HepG2 (cell line): ENCODE measurements at regions of chr22 and their contacts with region 1.

Region 1: DNA sequence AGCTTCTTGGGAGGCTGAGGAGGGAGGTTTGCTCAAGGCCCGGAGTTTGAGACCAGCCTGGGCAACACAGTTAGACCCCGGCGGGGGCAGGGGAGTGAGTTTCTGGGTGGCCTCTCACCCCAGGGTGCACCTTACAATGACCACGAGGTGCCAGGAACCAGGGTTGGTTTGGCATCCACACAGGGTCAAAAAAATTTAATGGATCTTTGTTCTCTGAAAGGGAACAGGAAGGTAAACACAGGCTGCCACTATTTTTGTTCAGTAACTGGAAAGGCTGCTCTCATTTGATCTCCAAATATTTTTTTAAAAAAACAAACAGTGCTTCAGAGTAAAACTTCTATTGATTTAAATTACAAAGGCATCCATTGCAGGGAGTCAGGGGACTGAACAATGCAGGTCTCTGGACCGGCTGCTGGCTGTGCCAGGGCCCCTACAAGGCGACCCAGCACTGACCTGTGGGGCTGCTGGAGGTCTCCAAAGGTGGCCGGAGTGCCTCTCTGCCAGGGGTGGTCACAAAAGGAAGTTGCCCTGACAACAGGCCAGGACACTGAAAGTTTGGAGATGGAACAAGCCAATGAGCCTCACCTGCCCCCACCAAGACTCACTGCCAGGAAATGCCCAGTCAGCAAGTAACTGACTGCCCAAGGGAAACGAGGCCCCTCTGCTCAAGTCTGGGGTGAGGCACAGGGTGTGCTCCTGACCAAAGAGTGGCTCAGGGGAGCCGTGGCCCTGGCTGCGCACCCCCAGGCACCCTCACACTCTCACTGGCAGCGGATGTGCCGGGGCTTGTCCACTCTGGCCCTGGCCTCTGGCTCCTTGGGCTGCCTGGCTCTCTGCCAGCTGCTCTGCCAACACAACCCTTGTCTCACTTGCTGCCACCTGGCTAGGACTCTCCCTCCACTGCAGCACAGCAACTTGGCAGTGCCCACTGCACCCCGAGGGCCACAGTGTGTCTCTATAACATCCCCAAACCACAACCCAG is 51.8 kb downstream of the ARFGAP3 start:
- DNase-seq: peak; percentile 93
- ATAC-seq: peak; percentile 78
- H3K4me3 ChIP-seq: peak overlapping the region in 1 of 3 experiments; percentile 26; a peak in 1 of 6 replicates
- H3K27ac ChIP-seq: peak overlapping the region; percentile 96
- H3K4me1 ChIP-seq: peaks cover 88% of the 10 kb centered on the region
- H3K27me3 ChIP-seq: no peaks in the 10 kb centered on the region
- CTCF ChIP-seq: no peak
- EP300 ChIP-seq: peak in 1 of 2 experiments; percentile 90; a peak in 2 of 4 replicates
- POLR2A ChIP-seq: no peak
- RAD21 ChIP-seq: no peak

Region 2: GRCh38 chr22:42717197-42717928 is 87.9 kb before region 1 on chr22:
- CTCF ChIA-PET with region 1: no interaction called
- POLR2A ChIA-PET with region 1: no interaction called
- in situ Hi-C with region 1: no loop called
- intact Hi-C with region 1: no loop called
- DNase-seq: no peak
- ATAC-seq: no peak
- H3K4me3 ChIP-seq: no peak overlapping the region
- H3K27ac ChIP-seq: no peak overlapping the region
- H3K4me1 ChIP-seq: peaks cover 48% of the 10 kb centered on the region
- H3K27me3 ChIP-seq: peaks cover 9 to 50% of the 10 kb centered on the region in 2 experiments
- CTCF ChIP-seq: no peak
- EP300 ChIP-seq: no peak
- POLR2A ChIP-seq: no peak
- RAD21 ChIP-seq: no peak

Region 3: DNA sequence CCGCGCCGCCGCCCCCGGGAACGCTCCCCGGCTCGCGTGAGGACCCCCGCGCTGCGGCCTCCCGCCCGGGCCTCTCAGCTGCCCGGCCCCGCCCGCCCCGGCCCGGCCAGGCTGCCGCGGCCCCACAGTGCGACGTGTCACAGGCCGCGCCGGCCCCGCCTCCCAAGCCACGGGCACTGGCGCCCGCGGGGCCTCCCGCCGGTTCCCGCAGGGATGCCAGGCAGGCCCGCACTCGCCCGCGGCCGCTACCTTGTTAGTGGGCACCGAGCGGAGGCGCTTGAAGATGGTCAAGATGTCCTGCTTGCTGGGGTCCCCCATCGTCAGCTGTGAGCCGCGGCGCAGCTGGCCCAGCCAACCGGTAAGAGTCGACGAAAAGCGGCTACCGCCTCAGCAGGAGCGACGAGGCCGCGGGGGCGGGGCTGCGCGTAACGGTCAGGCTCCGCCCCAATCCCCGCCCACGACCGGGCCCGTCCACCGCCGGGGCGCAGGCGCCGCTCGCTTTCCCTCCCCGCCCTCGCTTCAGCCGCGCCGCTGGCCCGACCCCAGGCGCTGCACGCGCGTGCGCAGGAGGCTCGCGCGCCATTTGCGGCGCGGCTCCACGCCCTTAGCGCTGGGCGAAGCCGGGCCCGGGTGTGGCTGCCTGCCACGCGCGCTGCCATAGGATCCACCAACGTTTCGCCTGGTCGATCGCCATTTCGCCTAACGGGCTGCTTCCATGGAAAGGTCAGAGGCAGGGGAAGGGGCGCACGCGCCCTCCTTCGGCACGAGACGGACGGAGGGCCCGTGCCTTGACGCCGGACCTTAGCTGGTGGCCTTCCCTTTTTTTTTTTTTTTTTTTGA is 51.8 kb after region 1 on chr22 and contains the start of gene ARFGAP3:
- CTCF ChIA-PET with region 1: no interaction called
- POLR2A ChIA-PET with region 1: interaction called, 8 read pairs
- in situ Hi-C with region 1: loop called (anchors 5 kb)
- intact Hi-C with region 1: loop called (anchors 10 kb)
- DNase-seq: peak; percentile 72
- ATAC-seq: peak; percentile 88
- H3K4me3 ChIP-seq: peak within 1 kb of the TSS; percentile 95 to 98 (median 96)
- H3K27ac ChIP-seq: peak within 1 kb of the TSS; percentile 94
- H3K4me1 ChIP-seq: peaks cover 39% of the 10 kb centered on the region
- H3K27me3 ChIP-seq: no peaks in the 10 kb centered on the region; a peak in 1 of 5 replicates
- CTCF ChIP-seq: no peak
- EP300 ChIP-seq: no peak; a peak in 1 of 4 replicates
- POLR2A ChIP-seq: peak; percentile 78 to 87
- RAD21 ChIP-seq: no peak; the same call in 1 of the 2 replicates
- total RNA-seq, gene ARFGAP3: 41.7 and 66.7 TPM in 2 replicates